ENCODE measurements at regions of chr7 and their contacts with region 1.

Region 1: GRCh38 chr7:22488643-22489462 is 11.1 kb downstream of the STEAP1B start:
- DNase-seq: peak; percentile 63 to 77 (median 67)
- ATAC-seq: peak; percentile 85 to 89
- H3K4me3 ChIP-seq: no peak overlapping the region
- H3K27ac ChIP-seq: no peak overlapping the region
- H3K4me1 ChIP-seq: no peaks in the 10 kb centered on the region
- H3K27me3 ChIP-seq: no peaks in the 10 kb centered on the region

Region 2: GRCh38 chr7:22110227-22110839 is 378.5 kb before region 1 on chr7:
- intact Hi-C with region 1: loop called (anchors 2 to 5 kb)
- DNase-seq: peak in 2 of 3 donors; percentile 56 to 70
- ATAC-seq: peak; percentile 65 to 74
- H3K4me3 ChIP-seq: no peak overlapping the region
- H3K27ac ChIP-seq: no peak overlapping the region
- H3K4me1 ChIP-seq: peaks cover 4% of the 10 kb centered on the region
- H3K27me3 ChIP-seq: no peaks in the 10 kb centered on the region

Region 3: GRCh38 chr7:22445140-22445743 is 43.6 kb before region 1 on chr7:
- intact Hi-C with region 1: no loop called
- DNase-seq: peak; percentile 59 to 88 (median 86)
- ATAC-seq: peak; percentile 92 to 94
- H3K4me3 ChIP-seq: no peak overlapping the region
- H3K27ac ChIP-seq: peak overlapping the region; percentile 55
- H3K4me1 ChIP-seq: peaks cover 4% of the 10 kb centered on the region
- H3K27me3 ChIP-seq: no peaks in the 10 kb centered on the region

Region 4: DNA sequence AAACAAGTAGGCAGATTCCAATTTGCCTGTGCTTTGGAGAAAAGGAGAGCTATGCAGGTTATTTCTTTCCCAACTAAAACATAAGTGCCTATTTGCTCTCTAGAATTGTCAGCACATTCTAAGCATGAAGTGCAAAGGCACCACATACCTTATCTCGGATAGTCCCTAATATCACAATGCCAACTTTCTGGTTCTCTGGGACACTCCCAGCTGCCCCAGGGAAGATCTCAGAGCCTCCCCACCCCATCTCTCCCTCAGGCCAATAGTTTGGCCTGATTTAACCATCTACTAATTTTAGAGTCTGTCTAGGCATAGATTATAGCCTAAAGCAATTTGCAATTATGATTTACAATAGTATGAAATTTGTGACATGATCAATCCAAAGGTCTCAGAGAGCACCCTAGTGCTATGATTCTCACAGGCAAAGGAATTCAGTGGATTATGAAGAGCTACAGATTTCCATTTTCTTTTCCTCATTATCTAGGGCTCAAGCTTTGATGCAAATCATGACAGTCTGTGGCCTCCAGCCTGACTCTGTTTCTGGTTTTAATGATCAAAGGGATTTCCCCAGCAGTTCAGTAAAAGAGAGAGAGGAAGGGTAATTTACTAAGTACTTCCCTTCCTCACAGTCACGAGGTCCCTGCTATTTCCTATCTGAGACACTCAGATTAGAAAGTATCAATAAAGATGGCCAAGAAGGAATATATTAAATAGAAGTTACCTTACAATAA is 209.2 kb after region 1 on chr7:
- intact Hi-C with region 1: no loop called
- DNase-seq: no peak
- ATAC-seq: no peak
- H3K4me3 ChIP-seq: no peak overlapping the region
- H3K27ac ChIP-seq: no peak overlapping the region
- H3K4me1 ChIP-seq: peaks cover 1% of the 10 kb centered on the region
- H3K27me3 ChIP-seq: no peaks in the 10 kb centered on the region